H1 (cell line): ENCODE measurements at regions of chr7 and their contacts with region 1.

Region 1: GRCh38 chr7:90244909-90245851 is at the start of gene CFAP69:
- DNase-seq: peak; percentile 85 to 100
- H3K4me3 ChIP-seq: peak within 1 kb of the TSS; percentile 67 to 85 (median 84)
- H3K27ac ChIP-seq: no peak within 1 kb of the TSS
- H3K4me1 ChIP-seq: peaks cover 0 to 6% (median 3%) of the 10 kb centered on the region in 4 experiments; a peak in 5 of 7 replicates
- H3K27me3 ChIP-seq: peaks cover 0 to 6% (median 2%) of the 10 kb centered on the region in 4 experiments; a peak in 3 of 7 replicates
- CTCF ChIP-seq: peak; percentile 25 to 38 (median 25)
- EP300 ChIP-seq: no peak; a peak in 1 of 3 replicates
- POLR2A ChIP-seq: no peak
- RAD21 ChIP-seq: peak in 1 of 2 experiments; percentile 22; a peak in 1 of 4 replicates
- total RNA-seq, gene CFAP69: 3.2 and 3.8 TPM in 2 replicates

Region 2: DNA sequence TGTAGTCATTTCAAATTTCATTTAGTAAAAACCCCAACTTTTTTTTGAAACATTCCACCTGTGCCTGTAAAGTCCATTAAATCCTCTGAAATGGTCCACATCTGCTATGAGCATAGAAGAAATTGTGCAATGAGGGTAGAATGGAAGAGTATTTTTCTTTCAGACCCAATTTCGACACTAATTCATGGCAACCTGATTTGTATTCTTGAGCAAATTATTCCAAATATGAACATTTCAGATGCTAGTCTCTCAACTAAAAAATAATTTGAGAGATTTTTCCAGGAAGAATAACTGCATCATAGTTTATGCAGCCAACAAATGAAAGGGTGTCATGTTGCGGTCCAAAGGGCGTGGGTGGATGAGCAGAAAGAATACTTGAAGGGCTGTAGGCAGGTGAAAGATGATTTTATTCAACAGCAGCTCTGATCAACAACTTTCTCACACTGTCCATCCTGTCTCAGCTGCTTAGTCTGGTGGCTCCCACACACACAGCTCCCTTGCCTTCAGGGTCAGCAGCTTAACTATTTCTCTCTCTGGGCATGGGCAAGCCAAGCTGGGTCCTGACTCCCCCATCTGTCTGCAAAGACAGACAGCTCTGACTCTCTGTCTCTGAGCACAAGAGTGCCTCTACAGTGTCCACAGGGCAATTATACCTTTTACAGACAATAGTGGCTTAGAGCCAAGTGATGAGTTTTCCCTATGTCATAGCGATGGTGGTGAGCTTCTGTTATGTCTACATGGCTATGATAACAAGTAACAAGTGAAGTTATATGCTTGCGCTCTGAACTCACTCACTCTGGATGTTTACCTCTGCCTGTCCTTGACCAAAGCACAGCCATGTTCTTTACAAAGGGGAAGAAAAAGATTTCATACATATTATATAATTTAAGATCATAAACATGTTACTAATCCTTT is 22.1 kb before region 1 on chr7:
- CTCF ChIA-PET with region 1: interaction called, 5 read pairs
- POLR2A ChIA-PET with region 1: interaction called, 28 read pairs
- DNase-seq: no peak
- H3K4me3 ChIP-seq: no peak overlapping the region
- H3K27ac ChIP-seq: no peak overlapping the region
- H3K4me1 ChIP-seq: peaks cover 0 to 18% (median 6%) of the 10 kb centered on the region in 4 experiments; a peak in 5 of 7 replicates
- H3K27me3 ChIP-seq: no peaks in the 10 kb centered on the region
- CTCF ChIP-seq: no peak
- EP300 ChIP-seq: no peak
- POLR2A ChIP-seq: no peak
- RAD21 ChIP-seq: no peak

Region 3: DNA sequence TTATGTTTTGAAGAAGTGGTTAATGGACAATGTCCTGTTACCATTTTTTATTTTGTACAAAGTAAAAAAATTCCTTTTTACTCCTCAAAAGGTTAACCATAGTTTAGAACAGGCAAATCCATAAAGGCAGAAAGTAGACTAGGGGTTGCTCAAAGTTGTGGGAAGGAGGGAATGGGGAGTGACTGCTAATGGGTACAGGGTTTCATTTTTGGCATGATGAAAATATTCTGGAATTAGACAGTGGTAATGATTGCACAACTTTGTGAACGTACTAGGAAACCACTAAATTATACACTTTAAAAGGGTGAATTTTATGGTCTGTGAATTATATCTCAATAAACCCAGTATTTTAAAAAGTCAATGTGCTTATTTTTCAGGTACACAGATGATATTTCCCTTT is 315.6 kb after region 1 on chr7:
- CTCF ChIA-PET with region 1: no interaction called
- POLR2A ChIA-PET with region 1: no interaction called
- DNase-seq: no peak
- H3K4me3 ChIP-seq: no peak overlapping the region
- H3K27ac ChIP-seq: no peak overlapping the region
- H3K4me1 ChIP-seq: no peaks in the 10 kb centered on the region
- H3K27me3 ChIP-seq: no peaks in the 10 kb centered on the region
- CTCF ChIP-seq: no peak
- EP300 ChIP-seq: no peak
- POLR2A ChIP-seq: no peak
- RAD21 ChIP-seq: no peak